Left cardiac atrium (tissue), 4 donors: ENCODE measurements at regions of chr1 and their contacts with region 1.

Region 1: DNA sequence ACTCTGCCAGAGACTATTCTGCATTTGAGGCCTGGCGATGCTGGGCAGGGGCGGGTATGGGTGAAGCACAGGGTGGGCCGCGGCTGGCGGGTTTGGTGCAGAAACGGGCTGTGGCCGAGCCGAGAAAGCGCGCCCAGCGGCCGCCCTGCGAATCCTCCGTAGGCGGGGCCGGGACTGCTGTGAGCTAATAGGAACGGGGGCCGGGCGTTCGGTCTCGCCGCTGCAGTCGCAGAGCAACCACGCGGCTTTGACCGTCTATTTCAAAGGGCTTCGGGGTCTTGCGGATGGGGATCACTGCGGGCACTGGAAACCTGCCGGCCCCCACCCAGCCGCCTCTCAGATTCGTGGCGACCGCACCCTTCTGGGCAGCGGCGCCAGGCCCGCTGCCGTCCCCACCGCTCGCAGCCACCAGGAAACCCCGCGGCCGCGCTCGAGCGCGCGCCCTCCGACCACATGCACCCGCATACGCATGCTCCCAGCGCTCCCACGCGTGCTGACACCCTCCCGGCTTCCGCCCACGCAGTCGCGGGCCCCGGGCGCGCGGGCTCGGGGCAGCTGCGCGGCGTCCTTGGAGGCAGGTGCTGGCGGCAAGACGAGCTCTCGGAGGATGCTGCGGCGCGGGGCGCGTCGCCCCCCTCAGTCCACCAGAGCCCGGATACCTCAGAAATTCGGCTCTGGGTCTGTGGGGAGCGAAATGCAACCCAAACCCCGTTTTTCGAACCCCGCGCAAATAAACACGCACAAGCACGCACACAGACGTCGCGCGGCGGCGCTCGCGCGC is 32.6 kb downstream of the DNTTIP2 start:
- DNase-seq: peak; percentile 92
- ATAC-seq: peak; percentile 75

Region 2: GRCh38 chr1:93304716-93305138 is 541.7 kb before region 1 on chr1:
- intact Hi-C with region 1: loop called (anchors 5 to 10 kb)
- DNase-seq: no peak
- ATAC-seq: peak; percentile 56 to 59

Region 3: GRCh38 chr1:93437976-93438605 is 408.3 kb before region 1 on chr1:
- intact Hi-C with region 1: loop called (anchors 5 to 10 kb)
- DNase-seq: no peak
- ATAC-seq: peak; percentile 47 to 62

Region 4: DNA sequence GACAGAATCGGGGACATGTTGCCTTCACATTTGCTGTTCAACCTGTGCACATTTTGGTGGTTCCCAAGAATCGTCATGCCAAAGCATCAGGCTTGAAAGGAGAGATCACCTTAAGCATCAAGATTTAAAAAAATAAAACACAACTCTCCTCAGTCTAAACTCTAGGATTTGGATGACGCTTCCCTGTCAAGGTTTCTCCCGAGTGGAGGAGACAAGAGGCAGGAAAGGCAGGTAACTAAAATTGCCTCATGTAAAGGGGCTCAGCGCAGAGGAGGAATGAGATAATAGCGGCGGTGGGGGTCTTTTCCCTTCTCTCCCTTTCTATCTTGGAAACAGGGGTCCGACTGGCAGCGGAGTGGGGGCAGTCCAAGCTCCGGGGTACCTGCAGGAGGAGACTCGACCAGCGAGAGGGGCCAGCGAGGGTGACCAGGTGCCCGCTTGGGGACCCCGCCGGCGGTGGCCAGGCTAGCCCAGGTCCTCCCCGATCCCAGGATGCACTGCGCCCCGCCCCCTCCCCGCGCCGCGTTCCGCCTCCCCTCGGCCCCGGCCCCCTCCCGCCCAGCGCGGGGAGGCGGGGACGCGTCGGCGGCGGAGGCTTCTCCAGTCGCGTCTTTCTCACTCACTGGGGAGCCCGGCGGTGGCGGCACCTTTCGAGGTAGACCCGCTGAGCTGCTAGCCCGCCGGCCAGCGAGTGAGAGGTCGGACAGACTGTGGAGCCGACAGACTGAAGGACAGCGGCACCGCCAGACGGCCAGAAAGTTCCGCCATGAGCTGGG is 398.7 kb before region 1 on chr1 and contains the start of gene FNBP1L:
- intact Hi-C with region 1: loop called in 1 of 2 experiments (anchors 5 kb)
- DNase-seq: peak; percentile 82
- ATAC-seq: peak; percentile 98
- total RNA-seq, gene FNBP1L: 18.0 to 20.9 TPM

Region 5: DNA sequence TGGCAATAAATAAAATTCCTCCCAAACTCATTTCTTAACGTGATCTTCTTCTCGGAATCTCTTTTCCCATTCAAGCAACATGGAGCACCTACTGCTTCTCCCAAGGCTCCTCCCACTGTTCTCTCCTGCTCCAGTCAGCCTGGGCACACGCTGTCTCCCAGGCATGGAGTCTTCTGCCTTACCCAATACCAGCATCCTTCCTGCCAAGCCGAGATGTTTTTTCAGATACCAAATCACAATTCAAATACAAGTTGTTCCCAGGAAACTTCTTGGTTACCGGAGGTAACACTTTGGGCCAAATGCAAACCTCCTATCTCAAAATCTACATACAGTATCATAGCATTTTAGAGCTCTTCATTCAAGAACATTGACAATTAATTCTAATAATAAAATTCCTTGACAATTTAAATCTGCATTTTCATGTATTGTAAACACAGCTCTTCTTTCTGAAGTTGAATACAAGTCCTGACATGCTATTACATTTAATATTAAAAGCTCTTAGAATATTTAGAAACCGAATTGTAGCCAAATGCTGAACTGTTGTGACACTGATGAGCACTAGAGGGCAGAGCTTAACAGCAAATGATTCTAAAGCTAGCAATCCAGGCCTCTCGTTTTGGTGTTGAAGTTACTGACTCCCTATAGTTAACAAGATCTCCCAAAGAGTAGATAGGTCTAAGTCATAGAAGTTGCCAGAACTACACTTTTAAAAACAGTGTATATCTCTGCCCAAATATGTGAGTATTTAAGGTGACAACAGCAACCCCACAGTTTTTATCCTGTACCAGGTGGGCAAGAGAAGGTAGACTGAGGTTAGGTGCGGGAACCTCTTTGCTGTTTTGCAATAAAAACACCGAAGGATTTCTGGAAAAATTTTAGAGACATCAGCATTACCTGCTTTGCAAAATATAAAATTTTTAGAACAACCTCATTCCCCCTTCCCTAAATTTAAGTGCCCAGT is 217.0 kb before region 1 on chr1:
- intact Hi-C with region 1: loop called in 1 of 2 experiments (anchors 10 kb)
- DNase-seq: no peak
- ATAC-seq: peak; percentile 67 to 69

Region 6: DNA sequence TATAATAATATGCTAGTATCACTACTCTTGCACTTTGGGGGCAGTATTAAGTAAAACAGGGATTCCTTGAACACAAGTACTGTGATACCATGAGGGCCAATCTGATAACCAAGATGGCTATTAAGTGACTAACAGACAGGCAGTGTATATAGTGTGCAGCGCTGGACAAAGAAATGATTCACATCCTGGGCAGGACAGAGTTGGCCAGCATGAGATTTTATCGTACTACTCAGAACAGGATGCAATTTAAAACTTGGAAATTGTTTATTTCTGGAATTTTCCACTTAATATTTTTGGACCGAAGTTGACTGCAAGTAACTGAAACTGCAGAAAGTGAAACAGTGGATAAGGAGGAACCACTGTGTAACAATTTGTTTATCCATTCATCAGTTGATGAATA is 42.0 kb before region 1 on chr1:
- intact Hi-C with region 1: no loop called
- DNase-seq: peak; percentile 39
- ATAC-seq: peak; percentile 87 to 98